Activated CD8-positive, alpha-beta T cell treated with anti-CD3 and anti-CD28 coated beads for 36 hours (primary cell): ENCODE measurements at regions of chr7 and their contacts with region 1.

Region 1: DNA sequence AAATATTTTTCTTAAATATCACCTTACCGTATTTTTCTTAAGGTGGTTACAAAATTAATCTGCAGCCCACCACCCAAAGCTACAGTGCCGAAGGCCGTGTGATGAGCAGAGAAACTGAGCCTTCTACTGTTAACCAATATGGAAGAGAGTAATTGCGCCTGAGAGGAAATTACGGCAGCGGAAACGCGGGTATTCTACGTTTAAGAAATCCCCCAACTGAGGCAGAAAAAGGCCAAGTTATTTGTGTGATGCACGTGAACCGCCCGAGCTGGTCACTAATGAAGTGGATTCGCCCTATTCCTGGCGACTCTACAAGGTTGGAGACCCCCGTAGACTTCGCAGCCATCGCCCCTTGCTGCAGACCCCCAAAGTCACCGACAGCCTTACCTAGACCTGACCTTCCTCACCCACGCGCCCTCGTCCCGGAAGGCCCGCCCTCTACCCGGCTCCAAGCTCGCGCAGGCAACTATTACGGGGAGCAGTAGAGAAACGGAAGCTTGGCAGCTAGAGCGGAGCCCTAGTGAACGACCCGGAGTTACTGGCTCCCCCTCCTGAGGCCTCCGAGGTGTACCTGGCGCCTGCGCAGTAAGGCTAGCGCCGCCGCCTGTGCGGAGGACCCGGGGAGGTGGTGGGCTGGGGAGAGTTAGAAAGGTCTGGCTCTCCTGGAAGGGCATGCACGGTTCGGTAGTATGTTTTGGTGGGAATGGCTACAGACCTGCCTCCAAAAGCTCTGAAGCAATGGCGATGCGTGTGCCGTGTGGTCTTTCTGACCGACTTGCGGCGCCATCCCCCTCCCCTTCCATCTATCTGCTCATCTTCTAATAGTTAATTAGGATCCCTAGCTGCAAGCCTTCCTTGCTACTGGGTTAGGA is at the start of gene MRPS33:
- DNase-seq: peak; percentile 98
- ATAC-seq: peak; percentile 98
- H3K4me3 Mint-ChIP-seq: peak within 1 kb of the TSS; percentile 97
- H3K27ac Mint-ChIP-seq: peak within 1 kb of the TSS; percentile 100
- H3K4me1 Mint-ChIP-seq: peaks cover 36% of the 10 kb centered on the region
- H3K27me3 Mint-ChIP-seq: peaks cover 7% of the 10 kb centered on the region
- CTCF ChIP-seq: no peak
- total RNA-seq, gene MRPS33: 95.5 to 101 TPM

Region 2: DNA sequence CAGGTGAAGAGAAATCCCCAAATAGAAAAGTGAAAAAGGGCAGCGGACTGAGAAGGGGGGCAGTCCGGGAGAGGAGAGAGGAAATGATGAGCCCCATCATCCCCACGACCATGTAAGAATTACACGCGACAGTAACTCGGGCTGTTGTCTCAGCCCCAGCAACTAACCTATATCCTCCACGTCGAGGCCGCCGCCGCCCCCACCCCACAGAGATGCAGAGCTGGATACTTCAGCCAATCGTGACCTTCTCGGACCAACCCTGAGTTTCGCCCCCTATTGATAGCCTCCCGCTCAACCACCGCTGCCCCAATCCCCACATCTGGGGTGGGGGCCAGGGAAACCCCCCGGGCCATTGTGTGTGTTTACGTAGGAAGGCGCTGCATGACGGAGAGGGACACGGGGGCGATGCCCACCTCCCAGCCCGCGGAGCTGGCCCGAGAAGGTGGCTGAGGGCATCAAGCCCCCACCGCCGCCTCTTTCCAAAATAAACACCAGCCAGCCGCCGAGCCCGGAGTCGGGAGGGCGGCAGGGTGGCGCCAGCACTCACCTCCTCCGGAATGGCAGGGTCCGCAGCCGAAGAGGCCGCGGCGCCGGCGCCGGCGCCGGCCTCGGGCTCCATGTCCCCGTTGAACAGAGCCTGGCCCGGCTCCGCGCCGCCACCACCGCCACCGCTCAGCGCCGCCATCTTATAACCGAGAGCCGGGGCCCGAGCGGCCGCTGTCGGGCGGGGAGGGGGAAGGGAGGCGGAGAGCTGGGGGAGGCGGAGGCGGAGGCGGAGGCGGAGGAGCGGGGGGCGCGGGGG is 90.5 kb before region 1 on chr7:
- CTCF ChIA-PET with region 1: interaction called, 3 read pairs
- POLR2A ChIA-PET with region 1: interaction called, 3 read pairs
- intact Hi-C with region 1: loop called (anchors 2 kb)
- DNase-seq: peak; percentile 82
- ATAC-seq: peak; percentile 75
- H3K4me3 Mint-ChIP-seq: no peak overlapping the region
- H3K27ac Mint-ChIP-seq: no peak overlapping the region
- H3K4me1 Mint-ChIP-seq: peaks cover 16% of the 10 kb centered on the region
- H3K27me3 Mint-ChIP-seq: no peaks in the 10 kb centered on the region
- CTCF ChIP-seq: no peak

Region 3: GRCh38 chr7:140989068-140989467 is 25.7 kb before region 1 on chr7:
- CTCF ChIA-PET with region 1: no interaction called
- POLR2A ChIA-PET with region 1: no interaction called
- intact Hi-C with region 1: no loop called
- DNase-seq: no peak
- ATAC-seq: no peak
- H3K4me3 Mint-ChIP-seq: no peak overlapping the region
- H3K27ac Mint-ChIP-seq: no peak overlapping the region
- H3K4me1 Mint-ChIP-seq: no peaks in the 10 kb centered on the region
- H3K27me3 Mint-ChIP-seq: no peaks in the 10 kb centered on the region
- CTCF ChIP-seq: no peak

Region 4: GRCh38 chr7:141039376-141039775 is 24.6 kb after region 1 on chr7:
- CTCF ChIA-PET with region 1: no interaction called
- POLR2A ChIA-PET with region 1: no interaction called
- intact Hi-C with region 1: no loop called
- DNase-seq: no peak
- ATAC-seq: no peak
- H3K4me3 Mint-ChIP-seq: no peak overlapping the region
- H3K27ac Mint-ChIP-seq: no peak overlapping the region
- H3K4me1 Mint-ChIP-seq: no peaks in the 10 kb centered on the region
- H3K27me3 Mint-ChIP-seq: peaks cover 12% of the 10 kb centered on the region
- CTCF ChIP-seq: no peak

Region 5: DNA sequence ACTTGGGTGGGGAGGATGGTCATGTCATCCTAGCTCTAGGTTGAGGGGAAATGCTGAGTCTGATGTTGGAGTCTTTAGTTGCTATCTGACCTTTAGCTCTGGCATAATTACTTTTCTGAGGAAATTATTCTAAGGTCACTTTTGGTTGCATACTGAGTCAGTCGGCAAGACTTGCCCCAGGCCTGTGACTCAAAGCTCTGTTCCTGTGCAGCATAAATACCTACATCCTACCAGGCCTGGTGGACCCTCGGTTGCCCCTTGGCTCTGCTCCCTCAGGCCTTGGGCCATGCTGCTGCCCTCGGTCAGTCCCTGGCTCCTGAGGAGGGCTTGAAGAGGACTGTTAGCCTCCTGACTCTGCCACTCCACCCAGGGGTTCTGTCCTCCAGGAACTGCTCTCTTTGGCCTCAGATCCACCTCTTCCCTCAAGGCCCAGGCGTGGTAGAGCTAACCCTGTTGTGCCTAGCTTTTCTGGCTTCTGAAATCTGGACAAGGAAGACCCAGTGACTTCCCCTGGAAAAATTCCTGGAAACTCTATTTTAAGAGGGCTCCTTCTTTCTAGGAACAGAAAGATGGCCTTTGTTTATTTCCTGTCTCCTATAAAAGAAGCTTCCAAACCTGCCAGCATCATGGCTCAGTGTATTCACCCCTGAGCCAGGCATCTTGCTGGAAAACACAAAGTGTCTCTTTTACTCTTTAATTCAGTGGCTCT is 130.3 kb after region 1 on chr7:
- CTCF ChIA-PET with region 1: no interaction called
- POLR2A ChIA-PET with region 1: no interaction called
- intact Hi-C with region 1: no loop called
- DNase-seq: no peak
- ATAC-seq: no peak
- H3K4me3 Mint-ChIP-seq: no peak overlapping the region
- H3K27ac Mint-ChIP-seq: no peak overlapping the region
- H3K4me1 Mint-ChIP-seq: no peaks in the 10 kb centered on the region
- H3K27me3 Mint-ChIP-seq: peaks cover 2% of the 10 kb centered on the region
- CTCF ChIP-seq: no peak